Natural killer cell (primary cell): ENCODE measurements at regions of chr2 and their contacts with region 1.

Region 1: GRCh38 chr2:110818767-110819481 is 86.6 kb downstream of the ACOXL start:
- DNase-seq: peak in 1 of 2 donors; percentile 15
- ATAC-seq: no peak
- H3K4me3 ChIP-seq: no peak overlapping the region
- H3K4me3 Mint-ChIP-seq: no peak overlapping the region
- H3K27ac ChIP-seq: no peak overlapping the region
- H3K27ac Mint-ChIP-seq: no peak overlapping the region
- H3K4me1 ChIP-seq: peaks cover 9% of the 10 kb centered on the region
- H3K4me1 Mint-ChIP-seq: peaks cover 17 to 19% of the 10 kb centered on the region in 2 donors
- H3K27me3 ChIP-seq: no peaks in the 10 kb centered on the region
- H3K27me3 Mint-ChIP-seq: peaks cover 22 to 27% of the 10 kb centered on the region in 2 donors
- CTCF ChIP-seq: no peak

Region 2: GRCh38 chr2:109726379-109727270 is 1092.3 kb before region 1 on chr2:
- intact Hi-C with region 1: no loop called
- DNase-seq: no peak
- ATAC-seq: no peak
- H3K4me3 ChIP-seq: no peak overlapping the region
- H3K4me3 Mint-ChIP-seq: no peak overlapping the region
- H3K27ac ChIP-seq: no peak overlapping the region
- H3K27ac Mint-ChIP-seq: no peak overlapping the region
- H3K4me1 ChIP-seq: no peaks in the 10 kb centered on the region
- H3K4me1 Mint-ChIP-seq: no peaks in the 10 kb centered on the region
- H3K27me3 ChIP-seq: peaks cover 3% of the 10 kb centered on the region
- H3K27me3 Mint-ChIP-seq: no peaks in the 10 kb centered on the region
- CTCF ChIP-seq: no peak

Region 3: DNA sequence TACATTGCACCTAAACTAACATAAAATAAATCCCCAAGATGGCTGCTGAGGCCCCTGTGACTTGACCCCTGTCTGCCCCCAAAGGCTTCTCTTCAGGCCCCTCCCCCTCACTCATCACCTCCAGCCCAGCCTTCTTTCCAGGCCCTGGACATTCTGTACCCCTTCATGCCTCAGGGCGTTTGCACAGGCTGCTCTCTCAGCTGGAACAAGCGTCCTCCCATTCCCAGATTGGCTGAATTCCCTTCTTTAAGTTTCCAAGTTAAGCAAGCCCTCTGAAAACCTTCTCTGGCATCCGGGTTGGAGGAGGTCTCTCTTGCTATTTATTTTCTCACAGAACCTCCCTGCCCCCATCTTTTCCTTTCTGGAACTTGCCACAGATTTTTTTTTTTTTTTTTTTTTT is 136.6 kb after region 1 on chr2:
- intact Hi-C with region 1: no loop called
- DNase-seq: no peak
- ATAC-seq: no peak
- H3K4me3 ChIP-seq: no peak overlapping the region
- H3K4me3 Mint-ChIP-seq: no peak overlapping the region
- H3K27ac ChIP-seq: no peak overlapping the region
- H3K27ac Mint-ChIP-seq: no peak overlapping the region
- H3K4me1 ChIP-seq: no peaks in the 10 kb centered on the region
- H3K4me1 Mint-ChIP-seq: no peaks in the 10 kb centered on the region
- H3K27me3 ChIP-seq: peaks cover 2% of the 10 kb centered on the region
- H3K27me3 Mint-ChIP-seq: peaks cover 8 to 13% of the 10 kb centered on the region in 2 donors
- CTCF ChIP-seq: no peak

Region 4: GRCh38 chr2:110993557-110994231 is 174.8 kb after region 1 on chr2:
- intact Hi-C with region 1: loop called (anchors 10 kb)
- DNase-seq: peak in 1 of 2 donors; percentile 50
- ATAC-seq: peak; percentile 84 to 89 (median 88)
- H3K4me3 ChIP-seq: no peak overlapping the region
- H3K4me3 Mint-ChIP-seq: peak overlapping the region; percentile 73
- H3K27ac ChIP-seq: peak overlapping the region; percentile 26
- H3K27ac Mint-ChIP-seq: peak overlapping the region; percentile 79 to 86
- H3K4me1 ChIP-seq: peaks cover 19% of the 10 kb centered on the region
- H3K4me1 Mint-ChIP-seq: peaks cover 30 to 32% of the 10 kb centered on the region in 2 donors
- H3K27me3 ChIP-seq: no peaks in the 10 kb centered on the region
- H3K27me3 Mint-ChIP-seq: no peaks in the 10 kb centered on the region
- CTCF ChIP-seq: no peak

Region 5: DNA sequence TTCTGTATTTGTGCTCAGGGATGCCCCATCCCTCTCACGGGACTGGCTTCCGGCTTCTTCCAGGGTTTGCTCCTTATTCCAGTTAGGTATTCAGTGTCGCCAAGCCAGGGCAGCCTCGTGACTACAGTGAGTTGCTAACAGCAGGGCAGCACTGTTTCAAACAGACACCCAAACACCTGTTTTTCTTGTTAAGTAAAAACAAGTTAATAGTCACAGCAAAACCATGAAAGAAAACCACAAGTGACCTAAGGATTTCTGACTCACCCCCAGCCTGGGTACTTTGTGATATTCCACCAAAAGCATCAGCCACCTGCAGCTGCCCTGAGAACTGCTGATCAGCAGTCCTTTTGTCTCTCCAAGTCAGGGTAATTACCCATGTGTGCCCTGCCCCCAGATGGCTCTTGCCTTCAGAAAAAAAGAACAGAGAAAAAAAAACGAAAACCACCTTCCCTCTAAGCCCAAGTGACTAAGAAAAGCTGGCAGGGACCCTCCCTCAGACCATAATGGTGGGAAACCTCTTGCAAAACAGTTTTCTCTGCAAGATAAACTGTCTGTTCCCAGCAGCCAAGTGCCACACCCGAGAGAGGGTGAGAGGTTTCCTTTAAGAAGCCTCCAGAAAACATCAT is 886.9 kb after region 1 on chr2:
- intact Hi-C with region 1: loop called (anchors 10 kb)
- DNase-seq: peak in 1 of 2 donors; percentile 41
- ATAC-seq: peak; percentile 52 to 69 (median 55)
- H3K4me3 ChIP-seq: no peak overlapping the region
- H3K4me3 Mint-ChIP-seq: no peak overlapping the region
- H3K27ac ChIP-seq: no peak overlapping the region
- H3K27ac Mint-ChIP-seq: peak overlapping the region in 1 of 2 donors; percentile 60
- H3K4me1 ChIP-seq: peaks cover 20% of the 10 kb centered on the region
- H3K4me1 Mint-ChIP-seq: peaks cover 18 to 24% of the 10 kb centered on the region in 2 donors
- H3K27me3 ChIP-seq: no peaks in the 10 kb centered on the region
- H3K27me3 Mint-ChIP-seq: no peaks in the 10 kb centered on the region
- CTCF ChIP-seq: no peak